Dendritic cell treated with granulocyte-macrophage colony-stimulating factor and Interleukin-4, amounts not matched to agents 40 ng/mL and 50 ng/mL, for 4 days (primary cell): ENCODE measurements at regions of chr16 and their contacts with region 1.

Region 1: DNA sequence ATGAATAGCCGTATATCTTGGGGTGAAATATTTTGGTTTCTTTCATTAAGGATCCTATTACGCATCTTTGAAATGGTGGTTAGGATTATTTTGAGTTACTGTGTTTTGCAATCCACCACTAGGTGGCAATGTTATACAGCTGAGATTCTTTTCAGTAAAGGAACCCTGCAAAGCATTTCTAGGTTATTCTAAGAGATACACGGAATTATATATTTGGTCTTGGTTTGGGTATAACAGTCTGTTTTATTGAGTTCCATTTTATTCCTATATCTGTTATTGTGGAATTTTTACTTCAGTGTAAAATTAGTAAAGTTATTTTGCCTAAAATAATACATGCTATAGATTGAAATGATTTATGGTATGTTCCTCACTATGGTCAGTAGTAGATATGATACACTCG is 62.9 kb upstream of the CPHXL start:
- H3K4me3 Mint-ChIP-seq: no peak overlapping the region
- H3K27ac Mint-ChIP-seq: no peak overlapping the region
- H3K4me1 Mint-ChIP-seq: no peaks in the 10 kb centered on the region
- H3K27me3 Mint-ChIP-seq: peaks cover 11% of the 10 kb centered on the region

Region 2: GRCh38 chr16:75820672-75821071 is 31.4 kb after region 1 on chr16:
- intact Hi-C with region 1: no loop called
- H3K4me3 Mint-ChIP-seq: no peak overlapping the region
- H3K27ac Mint-ChIP-seq: no peak overlapping the region
- H3K4me1 Mint-ChIP-seq: no peaks in the 10 kb centered on the region
- H3K27me3 Mint-ChIP-seq: no peaks in the 10 kb centered on the region

Region 3: GRCh38 chr16:76653390-76654026 is 864.3 kb after region 1 on chr16:
- intact Hi-C with region 1: loop called (anchors 5 kb)
- H3K4me3 Mint-ChIP-seq: no peak overlapping the region
- H3K27ac Mint-ChIP-seq: no peak overlapping the region
- H3K4me1 Mint-ChIP-seq: no peaks in the 10 kb centered on the region
- H3K27me3 Mint-ChIP-seq: no peaks in the 10 kb centered on the region

Region 4: DNA sequence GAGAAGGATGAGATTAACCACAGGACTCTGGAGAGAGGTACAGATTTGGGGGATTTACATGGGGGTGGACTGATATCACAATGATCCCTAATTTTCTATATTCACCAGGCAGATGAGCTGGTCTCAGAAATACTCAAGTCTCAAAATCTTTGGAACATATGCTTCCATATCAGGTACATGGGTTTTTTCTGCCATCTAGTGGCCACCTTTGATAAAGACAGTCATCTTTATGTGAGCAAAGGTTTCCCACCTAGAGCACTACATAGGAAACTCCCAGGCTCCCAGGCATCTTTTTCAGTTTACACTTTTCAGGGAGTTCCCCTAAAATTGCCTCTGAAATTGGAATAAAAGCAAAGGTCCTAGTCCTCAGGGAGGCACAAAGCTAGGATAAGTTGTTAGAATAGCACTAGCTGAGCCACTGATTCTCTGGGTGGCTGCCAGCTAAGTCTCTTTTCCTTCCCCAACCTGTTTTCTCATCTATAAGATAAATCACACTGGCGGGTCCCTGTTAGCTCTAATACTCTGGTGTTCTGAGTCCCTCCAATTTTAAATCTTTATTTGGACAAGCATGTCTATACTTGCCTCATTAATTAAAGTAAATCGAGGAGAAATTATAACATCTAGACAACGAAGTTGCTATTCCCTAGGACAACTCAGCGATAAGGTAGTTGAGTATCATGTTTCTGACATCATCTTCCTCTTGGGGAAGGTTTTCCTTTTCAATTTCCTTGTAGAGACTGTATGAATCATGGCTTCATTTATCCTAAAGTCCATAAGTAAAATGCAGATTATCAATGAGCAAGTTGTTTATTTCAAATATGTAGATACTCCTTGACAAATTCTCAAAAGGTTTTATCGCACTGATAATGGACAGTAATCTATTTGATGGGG is 1382.8 kb after region 1 on chr16:
- intact Hi-C with region 1: loop called (anchors 1 kb)
- H3K4me3 Mint-ChIP-seq: no peak overlapping the region
- H3K27ac Mint-ChIP-seq: no peak overlapping the region
- H3K4me1 Mint-ChIP-seq: no peaks in the 10 kb centered on the region
- H3K27me3 Mint-ChIP-seq: peaks cover 28% of the 10 kb centered on the region